CD14-positive monocyte (primary cell): ENCODE measurements at regions of chr10 and their contacts with region 1.

Region 1: DNA sequence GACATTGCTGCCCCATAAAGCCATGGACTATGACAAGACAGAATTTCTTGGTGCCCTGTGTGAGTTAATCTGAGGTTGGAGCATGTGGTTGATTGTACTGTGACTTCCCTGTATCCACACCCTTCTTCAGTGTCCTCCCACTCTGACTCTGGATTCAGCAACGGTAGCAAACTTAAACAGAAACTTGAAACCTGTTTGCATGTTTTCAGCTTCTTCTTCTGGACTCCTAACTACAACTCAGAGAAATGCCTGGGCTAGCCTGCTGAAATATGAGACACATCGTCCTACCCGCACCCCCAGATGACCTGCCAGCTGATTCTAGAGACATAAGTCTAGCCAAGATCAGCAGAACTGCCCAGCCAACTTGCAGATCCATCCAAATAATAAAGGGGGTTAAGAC is 78.4 kb downstream of the IPMK start:
- DNase-seq: no peak
- H3K4me3 ChIP-seq: no peak overlapping the region
- H3K4me3 Mint-ChIP-seq: no peak overlapping the region
- H3K27ac ChIP-seq: no peak overlapping the region
- H3K27ac Mint-ChIP-seq: peak overlapping the region in 1 of 7 donors; percentile 8
- H3K4me1 ChIP-seq: no peaks in the 10 kb centered on the region
- H3K4me1 Mint-ChIP-seq: peaks cover 4% of the 10 kb centered on the region
- H3K27me3 ChIP-seq: peaks cover 0 to 3% of the 10 kb centered on the region in 2 donors
- H3K27me3 Mint-ChIP-seq: peaks cover 1 to 8% (median 2%) of the 10 kb centered on the region in 3 donors
- CTCF ChIP-seq: no peak

Region 2: GRCh38 chr10:58064714-58065528 is 124.3 kb before region 1 on chr10:
- intact Hi-C with region 1: no loop called
- DNase-seq: no peak
- H3K4me3 ChIP-seq: no peak overlapping the region
- H3K4me3 Mint-ChIP-seq: no peak overlapping the region
- H3K27ac ChIP-seq: no peak overlapping the region
- H3K27ac Mint-ChIP-seq: no peak overlapping the region
- H3K4me1 ChIP-seq: no peaks in the 10 kb centered on the region
- H3K4me1 Mint-ChIP-seq: no peaks in the 10 kb centered on the region
- H3K27me3 ChIP-seq: no peaks in the 10 kb centered on the region
- H3K27me3 Mint-ChIP-seq: peaks cover 0 to 4% (median 0%) of the 10 kb centered on the region in 3 donors
- CTCF ChIP-seq: no peak

Region 3: DNA sequence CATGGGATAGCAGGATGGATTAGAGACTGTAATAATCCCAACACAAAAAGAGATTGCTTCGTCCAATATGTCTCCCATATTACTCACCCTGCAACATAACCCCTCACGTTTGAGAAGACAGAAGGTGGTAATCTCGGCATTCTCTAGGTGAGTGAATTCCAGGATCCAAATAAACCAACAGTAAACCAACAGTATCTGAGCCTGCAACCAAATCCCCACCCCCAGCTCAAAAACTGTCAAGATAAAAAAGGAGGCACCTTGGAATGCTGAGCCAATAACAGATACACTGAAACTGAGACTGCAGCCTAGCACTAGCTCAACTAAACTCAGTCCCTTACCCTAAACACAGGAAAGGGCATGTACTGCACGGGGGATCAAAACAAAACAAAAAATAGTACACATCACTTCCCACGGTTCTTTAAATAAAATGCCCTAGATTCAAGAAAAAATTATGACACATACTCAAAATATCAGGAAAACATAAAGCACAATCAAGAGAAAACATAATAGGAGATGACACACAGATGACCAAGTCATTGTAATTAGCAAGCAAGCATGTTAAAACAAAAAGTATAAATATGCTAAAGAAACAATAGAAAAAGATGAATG is 50.4 kb after region 1 on chr10:
- intact Hi-C with region 1: no loop called
- DNase-seq: no peak
- H3K4me3 ChIP-seq: no peak overlapping the region
- H3K4me3 Mint-ChIP-seq: no peak overlapping the region
- H3K27ac ChIP-seq: no peak overlapping the region
- H3K27ac Mint-ChIP-seq: peak overlapping the region in 2 of 7 donors; percentile 27 to 46
- H3K4me1 ChIP-seq: no peaks in the 10 kb centered on the region
- H3K4me1 Mint-ChIP-seq: peaks cover 13% of the 10 kb centered on the region
- H3K27me3 ChIP-seq: no peaks in the 10 kb centered on the region
- H3K27me3 Mint-ChIP-seq: no peaks in the 10 kb centered on the region
- CTCF ChIP-seq: no peak

Region 4: GRCh38 chr10:58341947-58342346 is 152.7 kb after region 1 on chr10:
- intact Hi-C with region 1: no loop called
- DNase-seq: no peak
- H3K4me3 ChIP-seq: no peak overlapping the region
- H3K4me3 Mint-ChIP-seq: no peak overlapping the region
- H3K27ac ChIP-seq: peak overlapping the region in 1 of 2 donors; percentile 4
- H3K27ac Mint-ChIP-seq: peak overlapping the region in 1 of 7 donors; percentile 24
- H3K4me1 ChIP-seq: peaks cover 23 to 47% of the 10 kb centered on the region in 2 donors
- H3K4me1 Mint-ChIP-seq: peaks cover 59% of the 10 kb centered on the region
- H3K27me3 ChIP-seq: no peaks in the 10 kb centered on the region
- H3K27me3 Mint-ChIP-seq: no peaks in the 10 kb centered on the region
- CTCF ChIP-seq: no peak

Region 5: DNA sequence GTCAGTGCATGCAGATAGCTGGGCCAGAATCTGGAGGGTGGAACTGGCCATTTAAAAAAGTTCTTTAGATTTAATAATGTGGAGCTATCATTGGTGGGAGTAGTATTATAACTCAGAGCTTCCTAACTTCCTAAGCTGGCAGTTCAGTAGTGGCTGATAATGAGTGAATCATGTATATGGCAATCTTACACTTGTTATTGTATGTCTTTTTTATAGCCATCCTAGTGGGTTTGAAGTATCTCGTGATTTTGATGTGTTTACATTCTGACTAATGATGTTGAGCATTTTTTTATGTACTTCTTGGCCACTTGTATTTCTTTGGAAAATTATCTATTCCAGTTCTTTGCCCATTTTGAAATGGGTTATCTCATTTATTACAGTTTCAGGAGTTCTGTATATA is 211.3 kb after region 1 on chr10:
- intact Hi-C with region 1: loop called in 1 of 2 experiments (anchors 10 kb)
- DNase-seq: no peak
- H3K4me3 ChIP-seq: no peak overlapping the region
- H3K4me3 Mint-ChIP-seq: no peak overlapping the region
- H3K27ac ChIP-seq: no peak overlapping the region
- H3K27ac Mint-ChIP-seq: peak overlapping the region in 1 of 7 donors; percentile 34
- H3K4me1 ChIP-seq: no peaks in the 10 kb centered on the region
- H3K4me1 Mint-ChIP-seq: no peaks in the 10 kb centered on the region
- H3K27me3 ChIP-seq: no peaks in the 10 kb centered on the region
- H3K27me3 Mint-ChIP-seq: no peaks in the 10 kb centered on the region
- CTCF ChIP-seq: no peak